Left ventricle myocardium inferior (tissue), 1 donor: ENCODE measurements at regions of chr16 and their contacts with region 1.

Region 1: DNA sequence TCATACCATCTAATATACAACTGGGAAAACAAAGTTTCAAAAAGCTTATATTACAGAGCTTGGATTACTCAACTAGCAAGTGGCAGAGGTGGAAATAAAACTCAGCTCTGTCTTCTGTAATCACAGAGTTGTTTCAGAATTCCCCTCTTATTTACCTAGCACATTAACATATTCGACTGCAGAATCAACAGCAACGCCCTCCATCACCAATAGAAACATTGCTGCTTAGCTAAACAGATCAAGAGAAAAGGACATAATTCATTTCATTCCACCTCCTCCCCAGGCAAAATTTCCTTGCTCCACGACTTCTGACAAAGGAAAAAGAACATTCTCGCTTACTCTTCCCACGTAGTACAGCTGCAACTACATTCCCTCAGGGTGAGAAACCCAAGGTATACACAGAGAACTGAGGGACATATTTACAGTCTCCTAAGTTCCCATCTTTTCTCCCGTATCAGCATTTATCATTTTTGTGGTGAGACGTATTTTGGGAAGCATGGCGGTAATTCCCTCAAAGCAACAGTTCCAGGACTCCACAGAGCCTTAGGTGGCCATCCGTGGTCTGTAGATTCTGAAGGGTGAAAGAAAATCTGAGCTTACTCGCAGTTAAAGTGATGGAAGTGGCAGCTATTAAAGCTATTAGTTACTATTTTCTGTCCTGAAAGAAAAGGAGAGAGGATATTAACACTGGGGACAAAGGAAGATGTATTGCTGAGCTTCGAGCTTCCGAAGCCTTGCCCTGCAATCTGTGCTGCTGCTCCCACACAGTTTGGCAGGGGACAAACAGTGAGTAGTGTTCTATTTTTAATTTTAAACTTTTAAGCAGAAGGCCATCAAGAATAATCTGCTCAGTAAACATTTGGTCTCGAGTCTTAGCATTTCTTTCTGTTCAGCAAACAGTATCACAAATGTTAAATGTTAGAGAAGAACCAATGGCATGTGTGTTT is 1296.2 kb downstream of the CDH8 start:
- DNase-seq: no peak
- H3K4me3 ChIP-seq: no peak overlapping the region
- H3K27ac ChIP-seq: no peak overlapping the region
- H3K4me1 ChIP-seq: peaks cover 11% of the 10 kb centered on the region
- H3K27me3 ChIP-seq: no peaks in the 10 kb centered on the region
- CTCF ChIP-seq: no peak

Region 2: DNA sequence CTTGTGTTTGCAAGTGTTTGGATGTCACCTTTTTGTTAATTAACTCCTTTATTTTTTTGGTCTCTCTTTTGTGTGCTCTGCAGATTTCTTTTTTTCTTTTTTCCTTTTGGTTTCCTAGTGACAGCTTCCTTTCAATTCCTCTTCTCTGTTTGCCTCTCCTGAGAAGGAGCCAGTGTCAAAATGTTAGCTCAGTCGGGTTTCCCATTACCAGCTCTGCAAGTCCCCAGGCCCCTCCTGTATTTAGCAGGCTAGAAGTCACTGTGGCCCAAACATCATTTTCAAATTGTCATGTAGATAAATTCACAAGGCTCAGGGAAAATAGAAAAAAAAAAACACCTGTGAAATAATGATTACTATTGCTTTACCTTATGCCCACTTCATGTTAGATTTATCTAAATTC is 325.4 kb before region 1 on chr16:
- intact Hi-C with region 1: no loop called
- DNase-seq: no peak
- H3K4me3 ChIP-seq: no peak overlapping the region
- H3K27ac ChIP-seq: no peak overlapping the region
- H3K4me1 ChIP-seq: no peaks in the 10 kb centered on the region
- H3K27me3 ChIP-seq: no peaks in the 10 kb centered on the region
- CTCF ChIP-seq: no peak

Region 3: DNA sequence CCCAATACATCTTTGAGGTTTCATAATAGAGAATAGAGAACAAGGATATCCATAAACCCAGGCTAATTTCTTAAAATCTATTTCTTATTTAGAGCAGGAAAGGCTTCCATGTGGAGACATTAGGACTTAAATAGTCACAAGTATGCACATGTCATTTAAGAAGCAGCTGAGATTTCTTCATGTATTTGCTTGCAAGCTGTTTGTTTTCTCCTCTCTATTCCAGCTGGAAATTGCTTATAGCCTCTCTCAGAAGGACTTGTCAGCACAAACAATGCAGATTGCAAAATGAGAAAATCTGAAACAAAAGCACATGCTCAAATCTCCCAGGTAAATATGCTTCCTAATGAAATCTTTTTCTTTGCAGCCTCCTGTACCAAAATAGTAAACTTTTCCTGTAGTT is 176.8 kb before region 1 on chr16:
- intact Hi-C with region 1: no loop called
- DNase-seq: no peak
- H3K4me3 ChIP-seq: no peak overlapping the region
- H3K27ac ChIP-seq: no peak overlapping the region
- H3K4me1 ChIP-seq: no peaks in the 10 kb centered on the region
- H3K27me3 ChIP-seq: no peaks in the 10 kb centered on the region
- CTCF ChIP-seq: no peak

Region 4: DNA sequence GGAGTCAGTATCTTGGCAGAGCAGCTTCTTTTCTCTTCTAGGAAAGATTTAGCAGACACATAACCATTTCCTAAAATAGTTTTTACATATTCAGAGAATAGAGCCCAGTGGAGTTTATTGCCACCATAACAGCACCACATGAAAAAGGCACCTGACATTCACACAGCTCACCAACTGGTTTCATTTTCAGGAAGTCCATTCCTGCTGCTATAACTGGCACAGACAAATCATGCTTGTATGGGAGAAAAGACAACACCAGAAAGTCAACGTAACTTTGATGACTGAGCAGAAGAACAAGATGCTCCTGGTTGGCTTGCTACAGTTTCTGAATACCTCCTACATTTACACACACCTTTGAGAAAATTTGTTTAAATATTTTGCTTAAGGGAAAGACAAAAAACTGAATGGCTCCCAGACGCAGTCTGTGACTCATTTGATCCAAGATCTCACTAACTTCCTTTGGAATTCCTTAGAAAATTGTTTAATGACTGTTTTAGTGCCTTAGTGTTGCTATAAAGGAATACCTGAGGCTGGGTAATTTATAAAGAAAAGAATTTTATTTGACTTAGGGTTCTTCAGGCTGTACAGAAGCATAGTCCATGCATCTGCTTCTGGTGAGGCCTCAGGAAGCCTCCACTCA is 84.4 kb before region 1 on chr16:
- intact Hi-C with region 1: no loop called
- DNase-seq: no peak
- H3K4me3 ChIP-seq: no peak overlapping the region
- H3K27ac ChIP-seq: no peak overlapping the region
- H3K4me1 ChIP-seq: no peaks in the 10 kb centered on the region
- H3K27me3 ChIP-seq: no peaks in the 10 kb centered on the region
- CTCF ChIP-seq: no peak

Region 5: DNA sequence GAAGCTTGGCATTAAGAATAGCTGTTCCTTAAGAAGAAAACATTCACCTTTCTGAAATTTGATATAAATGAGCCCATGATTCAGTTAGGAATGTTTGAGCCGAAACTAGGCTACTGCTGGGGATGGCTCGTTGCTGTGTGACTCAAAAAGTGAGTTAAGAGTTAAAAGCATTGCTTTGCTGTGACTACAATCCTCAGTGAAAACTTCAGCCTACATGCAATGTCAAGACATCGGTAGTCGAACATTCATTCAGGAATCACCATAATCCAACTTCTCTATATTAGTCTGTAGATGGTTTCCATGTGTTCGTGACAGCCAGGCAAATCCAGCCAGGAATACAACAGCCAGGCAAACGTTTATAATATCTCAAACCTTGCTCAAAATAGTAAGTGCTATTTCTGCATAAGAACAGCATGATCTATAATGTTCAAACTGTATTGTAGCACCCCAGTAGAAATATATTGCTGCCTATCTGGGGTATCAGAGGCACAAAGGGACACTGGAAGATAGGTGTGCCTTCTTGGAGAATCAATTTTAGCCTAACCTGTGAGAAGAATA is 71.1 kb after region 1 on chr16:
- intact Hi-C with region 1: loop called (anchors 10 kb)
- DNase-seq: no peak
- H3K4me3 ChIP-seq: no peak overlapping the region
- H3K27ac ChIP-seq: peak overlapping the region; percentile 73
- H3K4me1 ChIP-seq: peaks cover 22% of the 10 kb centered on the region
- H3K27me3 ChIP-seq: no peaks in the 10 kb centered on the region
- CTCF ChIP-seq: no peak

Region 6: GRCh38 chr16:62652441-62653120 is 1912.6 kb after region 1 on chr16:
- intact Hi-C with region 1: no loop called
- DNase-seq: no peak
- H3K4me3 ChIP-seq: no peak overlapping the region
- H3K27ac ChIP-seq: no peak overlapping the region
- H3K4me1 ChIP-seq: no peaks in the 10 kb centered on the region
- H3K27me3 ChIP-seq: no peaks in the 10 kb centered on the region
- CTCF ChIP-seq: no peak